Activated CD4-positive, alpha-beta T cell treated with anti-CD3 and anti-CD28 coated beads for 36 hours (primary cell): ENCODE measurements at regions of chr14 and their contacts with region 1.

Region 1: GRCh38 chr14:37594238-37594914 is 673 bp downstream of the FOXA1 start:
- DNase-seq: peak; percentile 75
- ATAC-seq: no peak
- H3K4me3 Mint-ChIP-seq: peak overlapping the region; percentile 53
- H3K27ac Mint-ChIP-seq: peak overlapping the region; percentile 29
- H3K4me1 Mint-ChIP-seq: peaks cover 28% of the 10 kb centered on the region
- H3K27me3 Mint-ChIP-seq: peaks cover 66% of the 10 kb centered on the region

Region 2: DNA sequence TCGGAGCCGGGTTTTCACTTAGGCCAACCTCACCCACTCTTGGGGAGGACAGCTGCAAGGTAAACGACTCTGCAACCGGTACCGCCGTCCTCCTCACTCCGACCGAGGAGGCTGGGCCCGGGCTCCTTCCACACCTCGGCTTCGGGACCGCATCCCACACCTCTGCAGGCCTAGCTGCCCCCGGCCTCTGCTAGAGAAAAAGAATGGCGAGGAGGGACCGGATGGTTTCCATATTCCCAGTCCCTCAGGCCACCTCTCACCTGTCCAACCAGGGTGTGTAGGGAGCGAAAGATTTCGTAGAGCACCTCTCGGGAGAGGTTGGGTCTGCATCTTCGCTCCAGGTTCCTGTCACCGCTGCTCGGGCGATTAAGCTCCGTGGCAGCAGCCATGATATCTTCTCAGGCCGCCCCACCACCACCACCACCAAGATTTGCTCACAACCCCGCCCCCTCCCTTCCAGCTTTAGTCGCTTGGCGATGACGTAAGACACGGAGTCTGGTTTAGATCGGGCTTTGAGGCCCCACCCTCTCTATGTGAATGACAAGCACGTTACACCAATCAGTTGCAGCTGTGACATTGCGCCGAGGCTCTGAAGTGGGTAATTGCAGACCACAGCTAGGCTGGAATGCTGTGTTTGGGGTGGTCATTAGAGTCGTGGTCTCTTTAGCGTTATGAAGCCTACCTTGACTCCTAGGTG is 1274.0 kb before region 1 on chr14 and contains the start of gene MBIP:
- CTCF ChIA-PET with region 1: no interaction called
- POLR2A ChIA-PET with region 1: no interaction called
- intact Hi-C with region 1: loop called in 1 of 2 experiments (anchors 10 kb)
- DNase-seq: peak; percentile 95
- ATAC-seq: peak; percentile 95
- H3K4me3 Mint-ChIP-seq: peak within 1 kb of the TSS; percentile 85
- H3K27ac Mint-ChIP-seq: peak within 1 kb of the TSS; percentile 94
- H3K4me1 Mint-ChIP-seq: peaks cover 29% of the 10 kb centered on the region
- H3K27me3 Mint-ChIP-seq: peaks cover 10% of the 10 kb centered on the region
- total RNA-seq, gene MBIP: 32.8 to 33.0 TPM

Region 3: GRCh38 chr14:36520601-36521525 is 1073.5 kb before region 1 on chr14:
- CTCF ChIA-PET with region 1: no interaction called
- POLR2A ChIA-PET with region 1: no interaction called
- intact Hi-C with region 1: loop called (anchors 5 kb)
- DNase-seq: peak; percentile 46
- ATAC-seq: peak; percentile 24
- H3K4me3 Mint-ChIP-seq: no peak overlapping the region
- H3K27ac Mint-ChIP-seq: no peak overlapping the region
- H3K4me1 Mint-ChIP-seq: peaks cover 18% of the 10 kb centered on the region
- H3K27me3 Mint-ChIP-seq: peaks cover 67% of the 10 kb centered on the region

Region 4: DNA sequence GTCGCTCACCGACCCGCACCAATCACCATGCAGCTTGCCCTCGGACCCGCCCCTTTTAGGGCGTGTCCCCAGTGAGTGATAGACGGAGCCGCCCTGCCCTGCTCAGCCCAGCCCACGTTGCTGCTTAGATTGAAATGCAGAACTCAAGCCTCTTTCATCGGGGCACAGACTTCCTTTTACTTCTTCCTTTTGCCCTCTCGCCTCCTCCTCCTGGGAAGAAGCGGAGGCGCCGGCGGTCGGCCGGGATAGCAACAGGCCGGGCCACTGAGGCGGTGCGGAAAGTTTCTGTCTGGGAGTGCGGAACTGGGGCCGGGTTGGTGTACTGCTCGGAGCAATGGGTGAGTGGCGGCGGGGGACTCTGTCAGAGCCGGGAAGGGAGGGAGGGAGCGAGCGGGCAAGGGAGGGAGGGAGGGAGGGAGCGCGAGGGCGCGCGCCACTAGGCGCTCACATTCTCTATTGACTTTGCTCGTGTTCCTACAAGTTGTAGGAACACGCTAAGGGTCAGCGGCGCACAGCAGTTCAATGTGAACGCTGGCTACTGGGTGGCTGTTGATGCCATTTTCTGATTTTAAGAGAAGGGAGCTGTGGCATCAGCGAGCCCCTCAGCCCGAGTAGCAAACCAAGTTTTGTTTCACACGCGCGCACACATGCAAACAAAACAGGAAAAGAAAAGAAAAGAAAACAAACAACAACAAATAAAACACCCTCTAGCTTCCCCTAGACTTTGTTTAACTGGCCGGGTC is 932.4 kb before region 1 on chr14 and contains the start of gene PAX9:
- CTCF ChIA-PET with region 1: no interaction called
- POLR2A ChIA-PET with region 1: interaction called, 6 read pairs
- intact Hi-C with region 1: loop called (anchors 2 to 5 kb)
- DNase-seq: peak; percentile 76
- ATAC-seq: peak; percentile 95
- H3K4me3 Mint-ChIP-seq: peak within 1 kb of the TSS; percentile 11
- H3K27ac Mint-ChIP-seq: no peak within 1 kb of the TSS
- H3K4me1 Mint-ChIP-seq: peaks cover 46% of the 10 kb centered on the region
- H3K27me3 Mint-ChIP-seq: peaks cover 82% of the 10 kb centered on the region
- total RNA-seq, gene PAX9: not detected

Region 5: DNA sequence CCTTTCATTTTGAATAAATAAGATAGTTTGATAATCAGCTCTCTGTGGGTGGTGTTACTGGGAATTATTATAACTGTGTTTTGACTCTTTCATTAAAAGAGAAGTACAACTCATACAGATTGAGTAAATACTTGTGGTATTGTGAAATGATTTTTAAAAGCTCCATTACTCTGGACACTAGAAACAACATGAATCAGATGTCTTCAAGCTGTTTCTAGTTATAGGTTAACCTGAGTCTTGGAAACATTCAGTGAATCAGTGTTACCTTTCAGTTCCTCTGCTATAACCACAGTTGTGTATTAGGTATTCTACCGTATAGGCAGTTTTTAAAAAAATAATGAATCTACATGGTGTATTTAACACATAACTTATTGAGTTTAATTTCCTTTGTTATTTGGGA is 484.9 kb after region 1 on chr14:
- CTCF ChIA-PET with region 1: no interaction called
- POLR2A ChIA-PET with region 1: no interaction called
- intact Hi-C with region 1: loop called in 1 of 2 experiments (anchors 10 kb)
- DNase-seq: no peak
- ATAC-seq: peak; percentile 45
- H3K4me3 Mint-ChIP-seq: no peak overlapping the region
- H3K27ac Mint-ChIP-seq: no peak overlapping the region
- H3K4me1 Mint-ChIP-seq: peaks cover 38% of the 10 kb centered on the region
- H3K27me3 Mint-ChIP-seq: no peaks in the 10 kb centered on the region